ENCODE measurements at regions of chr1 and their contacts with region 1.

Region 1: DNA sequence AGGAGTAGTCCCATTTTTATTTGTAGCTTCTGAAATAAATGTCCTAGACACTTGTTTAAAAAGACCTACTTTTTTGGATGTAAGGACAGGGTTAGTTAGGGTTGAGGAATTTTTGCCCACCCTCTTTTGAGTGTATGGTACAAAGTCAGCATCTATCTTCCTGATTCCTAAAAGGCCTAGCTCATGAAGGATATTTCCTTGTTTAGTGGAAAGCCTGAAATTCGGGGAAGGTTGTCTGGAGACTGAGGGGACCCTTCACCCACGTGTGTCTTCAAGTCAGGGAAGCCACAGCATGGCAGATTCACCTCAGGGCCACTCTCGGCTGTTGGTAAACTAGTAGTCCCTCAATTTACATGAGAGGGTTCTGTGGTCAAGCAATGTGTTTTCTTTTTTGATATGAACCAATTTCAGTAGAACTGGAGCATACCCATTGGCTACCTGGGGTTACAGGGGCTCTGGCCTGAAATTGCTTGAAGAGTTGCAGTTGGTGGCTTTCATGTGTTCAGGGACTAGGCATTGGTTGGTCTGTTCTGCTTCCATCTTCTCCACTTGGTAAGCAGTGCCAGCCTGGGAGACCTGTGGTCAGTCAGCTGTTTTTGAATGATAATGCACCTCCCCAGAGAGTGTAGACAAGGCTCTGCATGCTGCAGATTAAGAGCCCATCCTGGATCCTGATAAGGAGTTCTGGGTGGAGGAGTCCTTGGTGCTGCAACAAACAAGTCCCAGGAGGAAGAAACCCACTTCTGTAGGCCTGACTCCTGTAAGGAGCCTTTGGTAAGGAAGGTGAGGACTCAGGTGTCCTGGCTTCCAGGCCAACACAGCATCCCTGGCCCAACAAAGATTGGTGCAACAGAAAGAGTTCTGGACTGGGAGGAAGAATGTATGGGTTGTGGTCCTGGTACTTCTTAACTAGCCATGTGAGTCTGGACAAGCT is 6.3 kb downstream of the BTG2 start:
- DNase-seq: no peak
- ATAC-seq: no peak
- H3K4me3 ChIP-seq: no peak overlapping the region
- H3K4me3 Mint-ChIP-seq: peak overlapping the region in 1 of 3 donors; percentile 100
- H3K27ac ChIP-seq: no peak overlapping the region
- H3K27ac Mint-ChIP-seq: peak overlapping the region; percentile 94 to 96
- H3K4me1 ChIP-seq: peaks cover 9 to 55% of the 10 kb centered on the region in 2 experiments
- H3K4me1 Mint-ChIP-seq: peaks cover 63 to 76% (median 67%) of the 10 kb centered on the region in 3 donors
- H3K27me3 ChIP-seq: no peaks in the 10 kb centered on the region
- H3K27me3 Mint-ChIP-seq: no peaks in the 10 kb centered on the region

Region 2: GRCh38 chr1:203127666-203128430 is 183.8 kb before region 1 on chr1 and contains the start of gene ADORA1:
- CTCF ChIA-PET with region 1: no interaction called
- POLR2A ChIA-PET with region 1: no interaction called
- DNase-seq: no peak
- ATAC-seq: peak in 2 of 4 experiments; percentile 23 to 38
- H3K4me3 ChIP-seq: peak within 1 kb of the TSS in 1 of 2 donors; percentile 55
- H3K4me3 Mint-ChIP-seq: peak within 1 kb of the TSS; percentile 13 to 65 (median 13)
- H3K27ac ChIP-seq: no peak within 1 kb of the TSS
- H3K27ac Mint-ChIP-seq: peak within 1 kb of the TSS in 1 of 2 donors; percentile 37
- H3K4me1 ChIP-seq: peaks cover 0 to 12% of the 10 kb centered on the region in 2 experiments
- H3K4me1 Mint-ChIP-seq: peaks cover 9 to 15% (median 9%) of the 10 kb centered on the region in 3 donors
- H3K27me3 ChIP-seq: peaks cover 4 to 83% of the 10 kb centered on the region in 2 experiments
- H3K27me3 Mint-ChIP-seq: peaks cover 47 to 69% of the 10 kb centered on the region in 2 donors
- total RNA-seq, gene ADORA1: not detected

Region 3: DNA sequence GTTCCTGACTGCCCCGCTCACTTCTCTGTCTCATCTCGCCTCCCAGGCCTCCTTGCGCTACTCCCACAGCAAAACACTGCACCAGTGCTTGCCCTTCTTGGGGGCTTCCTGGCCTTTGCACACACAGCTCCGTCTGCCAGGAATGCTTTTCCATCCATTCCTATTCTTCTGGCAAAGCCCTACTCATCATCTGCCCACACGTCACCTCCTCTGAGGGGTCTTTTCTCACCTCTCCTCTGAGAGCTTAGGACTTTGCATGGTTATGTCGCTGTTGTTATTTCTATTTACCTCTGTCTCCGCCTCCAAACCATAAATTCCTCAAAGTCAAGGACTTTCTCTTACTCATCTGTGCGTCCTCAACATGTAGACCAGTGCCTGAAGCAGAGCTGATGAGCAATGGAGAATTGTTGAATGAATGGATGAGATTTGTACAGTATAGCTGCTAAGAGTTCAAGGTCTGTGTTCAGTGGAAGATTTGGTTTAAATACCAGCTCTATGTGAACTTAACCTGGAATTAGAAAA is 32.7 kb before region 1 on chr1:
- CTCF ChIA-PET with region 1: interaction called, 3 to 4 read pairs
- POLR2A ChIA-PET with region 1: interaction called, 8 to 271 read pairs
- DNase-seq: no peak
- ATAC-seq: no peak
- H3K4me3 ChIP-seq: no peak overlapping the region
- H3K4me3 Mint-ChIP-seq: peak overlapping the region in 1 of 3 donors; percentile 69
- H3K27ac ChIP-seq: no peak overlapping the region
- H3K27ac Mint-ChIP-seq: peak overlapping the region; percentile 82 to 89
- H3K4me1 ChIP-seq: peaks cover 32 to 42% of the 10 kb centered on the region in 2 experiments
- H3K4me1 Mint-ChIP-seq: peaks cover 39 to 63% (median 50%) of the 10 kb centered on the region in 3 donors
- H3K27me3 ChIP-seq: no peaks in the 10 kb centered on the region
- H3K27me3 Mint-ChIP-seq: no peaks in the 10 kb centered on the region

Region 4: DNA sequence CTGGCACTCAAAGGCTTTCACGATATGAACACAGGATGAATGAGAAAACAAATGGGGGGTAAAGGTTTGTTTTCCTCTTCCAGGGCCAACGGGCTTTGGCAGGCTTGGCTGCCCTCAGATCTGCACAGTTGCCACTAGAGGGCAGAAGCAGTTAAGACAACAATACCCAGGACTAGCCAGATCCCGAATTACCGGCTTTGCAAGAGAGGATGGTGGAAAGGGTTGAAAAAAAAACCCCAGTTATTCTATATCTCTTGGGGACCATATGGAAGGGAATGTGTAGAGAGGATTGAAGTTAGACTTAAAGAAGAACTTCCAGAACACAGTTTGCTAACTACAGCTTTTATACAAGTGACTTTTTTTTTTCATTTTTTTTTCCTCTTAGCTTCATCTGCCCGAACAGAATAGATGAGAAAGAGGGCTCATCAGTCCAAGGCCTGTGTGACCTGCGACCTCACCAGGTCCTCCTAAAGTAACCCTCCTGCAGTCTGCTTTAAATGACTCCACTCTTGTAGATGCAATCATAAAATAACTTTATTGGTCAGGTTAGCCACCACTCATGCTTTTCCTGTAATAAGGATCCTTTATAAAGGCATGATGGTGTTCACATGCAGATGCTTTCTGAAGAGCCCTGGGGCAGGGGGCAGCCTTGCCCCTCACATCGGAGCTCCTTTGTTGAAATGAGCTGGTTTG is 28.6 kb after region 1 on chr1:
- CTCF ChIA-PET with region 1: interaction called, 5 to 12 read pairs
- POLR2A ChIA-PET with region 1: interaction called, 11 to 15 read pairs
- DNase-seq: peak in 34 of 35 experiments; percentile 18 to 81 (median 41)
- ATAC-seq: peak; percentile 65 to 78 (median 72)
- H3K4me3 ChIP-seq: no peak overlapping the region
- H3K4me3 Mint-ChIP-seq: no peak overlapping the region
- H3K27ac ChIP-seq: no peak overlapping the region
- H3K27ac Mint-ChIP-seq: peak overlapping the region in 1 of 2 donors; percentile 38
- H3K4me1 ChIP-seq: peaks cover 5 to 27% of the 10 kb centered on the region in 2 experiments
- H3K4me1 Mint-ChIP-seq: peaks cover 39 to 42% (median 40%) of the 10 kb centered on the region in 3 donors
- H3K27me3 ChIP-seq: peaks cover 5 to 21% of the 10 kb centered on the region in 2 experiments
- H3K27me3 Mint-ChIP-seq: peaks cover 4 to 28% of the 10 kb centered on the region in 2 donors

Region 5: DNA sequence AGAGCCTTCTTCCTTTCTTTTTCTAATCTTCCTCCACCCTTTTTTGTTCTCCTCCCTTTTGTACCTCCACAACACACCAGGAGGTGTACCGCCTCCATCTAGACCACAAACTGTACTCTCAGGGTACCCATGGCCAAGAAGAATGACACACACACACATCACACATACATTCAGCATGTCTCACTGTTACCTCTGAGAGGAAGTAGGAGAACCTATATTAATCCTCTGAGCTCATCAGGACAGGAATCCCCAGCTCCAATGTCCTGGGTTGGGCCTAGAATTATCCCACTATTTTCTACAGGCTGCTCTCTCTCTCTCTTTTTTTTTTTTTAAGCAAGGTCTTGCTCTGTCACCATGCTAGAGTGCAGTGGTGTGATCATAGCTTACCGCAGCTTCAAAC is 351.7 kb after region 1 on chr1:
- CTCF ChIA-PET with region 1: no interaction called
- POLR2A ChIA-PET with region 1: no interaction called
- DNase-seq: no peak
- ATAC-seq: peak in 3 of 4 experiments; percentile 36 to 61 (median 50)
- H3K4me3 ChIP-seq: no peak overlapping the region
- H3K4me3 Mint-ChIP-seq: peak overlapping the region in 2 of 3 donors; percentile 7 to 18
- H3K27ac ChIP-seq: peak overlapping the region; percentile 48
- H3K27ac Mint-ChIP-seq: peak overlapping the region; percentile 76 to 88
- H3K4me1 ChIP-seq: peaks cover 27 to 58% of the 10 kb centered on the region in 2 experiments
- H3K4me1 Mint-ChIP-seq: peaks cover 65 to 77% (median 70%) of the 10 kb centered on the region in 3 donors
- H3K27me3 ChIP-seq: no peaks in the 10 kb centered on the region
- H3K27me3 Mint-ChIP-seq: no peaks in the 10 kb centered on the region

Region 6: GRCh38 chr1:204335085-204335484 is 1023.5 kb after region 1 on chr1:
- CTCF ChIA-PET with region 1: no interaction called
- POLR2A ChIA-PET with region 1: no interaction called
- DNase-seq: no peak
- ATAC-seq: no peak
- H3K4me3 ChIP-seq: no peak overlapping the region
- H3K4me3 Mint-ChIP-seq: no peak overlapping the region
- H3K27ac ChIP-seq: no peak overlapping the region
- H3K27ac Mint-ChIP-seq: no peak overlapping the region
- H3K4me1 ChIP-seq: no peaks in the 10 kb centered on the region
- H3K4me1 Mint-ChIP-seq: no peaks in the 10 kb centered on the region
- H3K27me3 ChIP-seq: peaks cover 0 to 30% of the 10 kb centered on the region in 2 experiments
- H3K27me3 Mint-ChIP-seq: peaks cover 0 to 10% of the 10 kb centered on the region in 2 donors

Region 7: DNA sequence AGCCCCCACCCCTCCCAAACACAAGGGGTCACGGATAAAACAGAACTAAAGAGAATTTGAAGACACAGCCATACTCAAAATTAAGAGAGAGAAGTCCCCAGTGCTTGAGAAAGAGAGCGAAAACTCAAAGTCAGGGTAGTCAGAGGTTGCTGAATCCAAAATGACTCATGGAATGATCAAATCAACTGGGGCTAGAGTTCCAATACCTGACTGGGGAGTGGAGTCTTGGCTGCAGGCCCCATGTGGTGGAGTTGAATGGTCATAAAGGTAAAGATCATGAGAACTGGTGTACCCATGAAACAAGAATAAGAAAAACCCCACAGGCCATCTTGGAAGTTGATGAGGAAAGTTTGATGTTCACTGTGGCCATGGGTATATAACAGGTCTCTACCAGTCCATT is 1458.4 kb after region 1 on chr1:
- CTCF ChIA-PET with region 1: no interaction called
- POLR2A ChIA-PET with region 1: no interaction called
- DNase-seq: no peak
- ATAC-seq: no peak
- H3K4me3 ChIP-seq: no peak overlapping the region
- H3K4me3 Mint-ChIP-seq: no peak overlapping the region
- H3K27ac ChIP-seq: no peak overlapping the region
- H3K27ac Mint-ChIP-seq: no peak overlapping the region
- H3K4me1 ChIP-seq: no peaks in the 10 kb centered on the region
- H3K4me1 Mint-ChIP-seq: no peaks in the 10 kb centered on the region
- H3K27me3 ChIP-seq: peaks cover 0 to 10% of the 10 kb centered on the region in 2 experiments
- H3K27me3 Mint-ChIP-seq: peaks cover 7 to 44% of the 10 kb centered on the region in 2 donors